ENCODE measurements at regions of chr1 and their contacts with region 1.

Region 1: DNA sequence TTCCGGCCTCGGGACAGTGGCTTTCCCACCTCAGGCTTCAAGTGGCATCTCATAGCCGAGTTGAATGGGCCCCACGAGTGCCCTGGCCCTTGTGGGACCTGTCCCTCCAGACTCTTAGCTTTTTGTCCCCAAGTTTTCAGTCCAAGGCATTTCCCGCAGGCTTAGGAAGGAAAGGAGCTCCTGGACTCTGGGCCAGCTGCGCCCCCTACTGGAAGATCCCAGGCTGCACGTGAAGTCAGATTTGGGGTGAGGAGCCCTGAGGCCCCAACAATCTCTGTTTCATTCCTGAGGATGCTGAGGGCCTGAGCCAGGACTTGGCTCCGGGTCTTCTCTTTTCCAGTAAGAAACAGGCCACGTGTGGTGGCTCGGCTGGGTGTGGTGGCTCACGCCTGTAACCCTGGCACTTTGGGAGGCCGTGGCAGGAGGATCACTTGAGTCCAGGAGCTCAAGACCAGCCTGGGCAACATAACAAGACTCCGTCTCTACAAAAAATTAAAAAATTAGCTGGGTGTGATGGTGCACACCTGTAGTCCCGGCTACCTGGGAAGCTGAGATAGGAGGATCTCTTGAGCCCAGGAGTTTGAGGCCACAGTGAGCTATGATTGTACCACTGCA is 67.4 kb downstream of the ARHGEF10L start:
- DNase-seq: no peak
- H3K4me3 ChIP-seq: no peak overlapping the region
- CTCF ChIP-seq: peak; percentile 93

Region 2: DNA sequence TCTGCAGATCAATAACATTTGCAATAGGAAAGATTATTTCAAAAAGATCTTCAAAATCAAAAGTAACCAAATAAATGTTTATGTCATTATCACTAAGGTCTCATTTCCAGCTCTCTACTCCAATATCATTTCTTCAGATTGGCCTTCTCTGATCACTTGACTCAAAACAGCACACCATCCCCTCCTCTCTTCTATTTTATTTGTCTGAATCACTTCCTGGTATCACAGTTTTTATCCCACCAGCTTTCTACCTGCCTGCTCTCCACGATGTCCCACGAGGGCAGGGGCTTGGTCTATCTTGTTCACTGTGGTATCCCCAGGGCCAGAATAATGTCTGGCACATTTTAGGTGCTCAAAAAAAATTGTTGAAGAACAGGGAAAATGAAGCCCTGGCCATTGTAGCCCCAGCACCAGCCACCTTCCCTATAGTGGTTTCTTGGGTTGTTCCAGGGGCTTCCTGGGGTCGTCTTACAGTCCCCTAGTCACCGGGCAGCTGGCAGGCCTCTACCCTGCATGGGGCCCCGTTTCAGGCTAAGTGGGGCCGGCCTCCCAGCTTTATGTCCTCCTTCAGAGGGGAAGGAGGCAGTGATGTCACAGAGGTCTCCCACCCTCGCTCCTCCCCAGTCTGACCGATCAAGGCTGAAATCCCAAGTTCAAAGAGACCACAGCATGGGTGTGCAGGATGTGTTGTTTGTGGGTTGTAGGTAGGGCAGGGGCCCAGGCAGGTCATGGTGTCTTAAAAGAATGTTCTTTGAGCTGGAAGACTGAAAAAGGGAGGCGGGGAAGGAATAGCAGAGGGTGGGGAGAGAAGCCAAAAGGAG is 405.5 kb before region 1 on chr1:
- CTCF ChIA-PET with region 1: no interaction called
- POLR2A ChIA-PET with region 1: no interaction called
- DNase-seq: no peak
- H3K4me3 ChIP-seq: no peak overlapping the region
- CTCF ChIP-seq: no peak

Region 3: GRCh38 chr1:17520071-17520813 is 86.7 kb before region 1 on chr1:
- CTCF ChIA-PET with region 1: interaction called, 1,054 read pairs
- POLR2A ChIA-PET with region 1: no interaction called
- DNase-seq: no peak
- H3K4me3 ChIP-seq: no peak overlapping the region
- CTCF ChIP-seq: no peak

Region 4: DNA sequence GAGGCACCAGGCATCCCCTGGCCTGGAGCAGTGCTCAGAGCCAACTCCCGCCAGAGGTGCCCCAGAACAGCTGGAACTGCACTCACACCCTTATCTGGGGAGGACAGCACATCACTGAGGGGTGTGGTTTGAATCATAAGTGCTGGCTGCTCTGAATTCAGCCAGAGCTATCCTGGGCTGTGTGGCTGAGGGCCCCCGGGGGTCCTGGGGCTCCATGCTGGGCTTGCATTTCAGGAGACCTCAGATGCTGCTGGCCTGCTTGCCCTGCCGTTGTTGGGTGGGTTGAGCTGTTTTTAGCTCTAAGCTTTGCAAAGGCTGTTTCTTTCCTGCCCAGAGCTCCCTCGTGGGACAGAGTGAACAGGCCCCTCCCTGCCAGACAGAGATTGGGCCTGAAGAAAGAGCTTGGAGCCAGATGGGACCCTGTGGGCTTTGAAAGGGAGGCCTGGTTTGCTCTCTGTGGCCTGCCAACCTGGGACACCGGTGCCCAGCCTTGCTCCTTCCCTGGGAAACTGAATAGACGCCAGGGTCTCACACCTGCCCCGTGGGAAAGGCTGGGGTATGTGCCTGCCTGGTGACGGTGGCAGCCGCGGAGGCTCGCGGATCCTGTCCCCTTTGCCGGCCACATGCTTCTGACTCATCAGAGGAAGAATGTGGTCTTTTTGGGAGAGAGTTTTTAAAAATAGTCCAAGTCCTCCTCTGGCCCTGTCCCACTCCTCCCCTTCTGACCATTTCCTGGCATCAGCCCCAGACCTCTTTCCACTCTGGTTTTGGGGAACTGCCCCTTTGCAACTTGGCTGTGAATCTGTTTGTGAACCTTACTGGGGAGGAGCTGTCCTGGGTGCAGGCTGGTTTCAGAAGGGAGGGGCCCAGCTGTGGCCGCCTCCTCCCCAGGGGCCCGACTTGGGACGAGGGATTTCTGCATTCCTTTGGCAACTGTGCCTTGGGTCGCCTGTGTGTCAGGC is 37.5 kb before region 1 on chr1:
- CTCF ChIA-PET with region 1: interaction called, 24 read pairs
- POLR2A ChIA-PET with region 1: no interaction called
- DNase-seq: peak; percentile 71
- H3K4me3 ChIP-seq: no peak overlapping the region
- CTCF ChIP-seq: no peak

Region 5: DNA sequence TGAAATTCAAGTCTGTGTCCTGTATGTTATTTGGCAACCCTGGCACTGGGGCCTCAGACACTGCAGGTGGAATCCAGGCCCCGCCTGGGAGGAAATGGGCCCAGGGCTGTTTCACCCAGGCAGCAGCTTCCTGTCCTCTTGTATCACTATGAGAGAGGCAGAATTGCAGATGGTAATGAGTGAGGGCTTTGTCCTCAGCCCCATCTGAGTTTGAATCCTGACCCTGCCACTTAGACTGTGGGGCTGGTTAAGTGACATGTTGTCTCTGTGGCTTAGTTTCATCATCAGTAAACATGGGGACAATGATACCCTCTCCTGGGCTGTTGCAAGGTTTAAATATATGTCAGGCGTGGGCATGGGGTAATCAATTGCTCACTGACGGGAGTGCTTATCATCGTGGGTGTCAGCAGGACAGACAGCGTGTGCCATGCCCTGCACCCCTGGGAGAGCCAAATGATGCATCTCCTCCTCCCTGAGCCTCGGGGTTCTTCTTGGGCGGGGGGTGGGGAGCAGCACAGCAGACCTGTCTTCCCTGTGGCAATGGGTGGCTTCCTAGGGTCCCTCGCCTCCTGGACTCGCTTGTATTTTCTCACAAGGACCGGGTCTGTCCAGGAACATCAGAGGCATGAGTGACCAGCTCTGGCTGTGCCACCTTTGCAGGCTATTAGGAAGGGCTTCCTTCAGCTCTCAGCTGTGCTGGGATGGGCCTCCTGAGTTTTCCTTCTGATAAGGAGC is 25.4 kb before region 1 on chr1:
- CTCF ChIA-PET with region 1: interaction called, 97 read pairs
- POLR2A ChIA-PET with region 1: no interaction called
- DNase-seq: no peak
- H3K4me3 ChIP-seq: no peak overlapping the region
- CTCF ChIP-seq: no peak

Region 6: DNA sequence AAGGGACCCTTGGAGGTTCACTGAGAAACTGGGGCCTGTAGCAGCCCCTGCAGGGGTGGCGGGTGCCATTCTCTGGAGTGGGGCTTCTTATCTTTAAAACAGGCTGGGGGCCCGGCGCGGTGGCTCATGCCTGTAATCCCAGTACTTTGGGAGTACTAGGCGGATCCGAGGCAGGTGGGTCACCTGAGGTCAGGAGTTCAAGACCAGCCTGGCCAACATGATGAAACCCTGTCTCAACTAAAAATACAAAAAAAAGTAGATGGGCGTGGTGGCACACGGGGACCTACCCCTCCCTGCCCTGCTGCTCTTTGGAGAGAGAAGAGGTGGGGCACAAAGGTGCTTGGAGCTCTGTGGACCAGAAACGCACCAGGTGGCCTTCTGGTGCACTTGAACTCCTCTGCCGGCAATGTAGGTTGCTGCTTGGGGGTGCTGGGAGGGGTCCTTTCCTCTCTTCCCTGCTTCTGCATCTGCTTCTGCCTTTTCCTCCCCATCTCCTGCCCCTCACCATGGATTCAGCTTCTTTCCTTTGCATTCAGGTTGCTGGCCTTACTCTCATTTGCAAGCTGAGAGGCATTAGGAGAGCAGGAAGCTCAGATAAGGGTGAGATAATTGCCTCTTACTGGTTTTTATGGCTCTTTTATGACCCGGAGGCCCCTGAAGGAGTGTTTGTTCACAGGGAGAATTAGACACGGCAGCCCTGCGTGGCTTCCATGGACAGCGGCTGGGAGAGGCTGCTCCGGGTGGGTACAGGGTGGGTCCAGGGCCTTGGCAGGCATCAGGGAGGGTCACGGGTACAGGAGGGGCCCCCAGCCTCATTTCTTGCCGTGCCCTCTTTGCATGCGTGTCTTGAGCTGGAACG is 10.1 kb before region 1 on chr1:
- CTCF ChIA-PET with region 1: interaction called, 106 read pairs
- POLR2A ChIA-PET with region 1: no interaction called
- DNase-seq: no peak
- H3K4me3 ChIP-seq: no peak overlapping the region
- CTCF ChIP-seq: no peak

Region 7: DNA sequence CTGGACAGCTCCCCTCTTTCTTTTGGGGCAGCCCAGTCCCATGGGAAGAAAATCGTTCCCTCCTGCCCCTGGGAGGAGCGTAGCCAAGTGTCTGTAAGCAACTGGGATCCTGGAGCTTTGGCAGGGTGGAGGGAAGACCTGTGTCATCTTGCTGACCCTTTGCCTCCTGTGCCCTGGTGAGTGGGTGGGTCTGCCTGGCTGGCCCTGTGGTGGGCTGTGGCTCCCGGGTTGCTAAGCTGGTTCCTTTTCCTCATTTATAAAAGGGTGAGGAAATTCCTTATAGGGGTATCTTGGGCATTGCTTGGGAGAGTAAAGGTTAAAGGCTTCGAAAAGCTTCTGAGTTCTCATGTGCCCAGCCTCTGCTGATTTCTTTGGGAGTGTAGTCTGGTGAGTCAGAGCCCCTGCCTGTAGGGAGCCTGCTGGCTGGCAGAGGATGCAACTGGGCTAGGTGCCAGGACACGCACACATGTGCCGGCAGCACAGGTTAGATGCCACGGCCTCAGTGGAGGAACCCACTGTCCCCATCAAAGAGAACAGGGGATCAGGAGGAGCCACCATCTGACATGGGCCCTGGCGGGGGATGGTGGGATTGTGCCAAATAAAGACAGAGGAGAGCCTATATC is 17.8 kb after region 1 on chr1:
- CTCF ChIA-PET with region 1: interaction called, 31 read pairs
- POLR2A ChIA-PET with region 1: no interaction called
- DNase-seq: no peak
- H3K4me3 ChIP-seq: no peak overlapping the region
- CTCF ChIP-seq: no peak

Region 8: DNA sequence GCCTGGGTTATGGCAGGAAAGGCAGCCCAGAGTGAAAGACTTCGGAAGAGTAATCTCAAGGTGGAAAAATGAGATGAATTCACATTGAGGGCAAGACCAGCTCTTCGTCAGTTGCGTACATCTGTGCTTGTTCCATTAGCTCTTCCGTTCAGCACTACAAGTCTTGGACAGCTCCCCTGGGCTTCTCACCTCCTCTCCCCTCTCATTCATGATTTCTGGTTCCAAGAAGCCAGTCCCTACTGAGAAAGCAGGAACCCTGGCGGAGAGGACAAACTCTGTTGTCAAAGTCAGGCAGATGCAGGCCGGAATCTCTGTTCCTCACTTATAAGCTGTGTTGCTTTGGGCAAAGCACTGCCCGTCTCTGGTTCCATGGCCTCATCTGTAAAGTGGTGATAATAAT is 224.7 kb after region 1 on chr1:
- CTCF ChIA-PET with region 1: no interaction called
- POLR2A ChIA-PET with region 1: no interaction called
- DNase-seq: peak; percentile 3
- H3K4me3 ChIP-seq: no peak overlapping the region
- CTCF ChIP-seq: no peak